ENCODE measurements at regions of chr21 and their contacts with region 1.

Region 1: DNA sequence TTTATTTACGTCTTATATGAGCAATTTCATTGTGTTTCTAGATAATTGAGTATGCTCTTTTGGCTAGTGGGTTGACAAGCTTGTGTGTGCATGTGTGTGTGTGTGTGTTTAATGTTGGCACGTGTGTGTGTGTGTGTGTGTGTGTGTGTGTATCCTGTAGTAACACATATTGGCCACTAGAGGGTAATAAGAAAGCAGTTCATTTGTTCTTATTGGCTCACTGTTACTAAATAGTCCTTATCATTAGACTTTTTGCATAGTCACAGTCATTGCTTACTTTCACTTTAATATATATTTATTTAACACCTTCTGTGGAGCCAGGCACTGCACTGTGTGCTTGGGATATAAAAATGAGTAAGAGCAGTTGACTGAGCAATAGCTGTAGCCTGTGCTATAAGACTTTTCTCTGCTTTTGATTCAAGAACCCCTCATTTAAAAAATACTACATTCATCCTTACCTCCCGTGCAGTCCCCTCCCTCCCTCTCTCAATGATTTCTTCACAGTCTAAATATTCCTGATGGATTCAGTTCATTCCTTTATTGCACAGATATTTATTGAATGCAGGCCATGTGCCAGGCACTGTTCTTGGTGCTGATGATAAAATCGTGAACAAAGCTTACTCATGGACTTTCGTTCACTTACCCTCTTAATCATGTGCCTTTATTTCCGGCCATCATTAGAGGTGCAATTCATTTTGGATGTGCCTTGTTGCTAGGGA is 96.7 kb downstream of the DYRK1A start:
- DNase-seq: peak; percentile 12
- ATAC-seq: peak; percentile 76
- H3K4me3 ChIP-seq: no peak overlapping the region
- H3K27ac ChIP-seq: no peak overlapping the region
- H3K4me1 ChIP-seq: peaks cover 11% of the 10 kb centered on the region
- H3K27me3 ChIP-seq: no peaks in the 10 kb centered on the region
- CTCF ChIP-seq: peak; percentile 65 to 79 (median 76)
- EP300 ChIP-seq: no peak
- POLR2A ChIP-seq: no peak
- RAD21 ChIP-seq: peak; percentile 46; the same call in 1 of the 2 replicates

Region 2: GRCh38 chr21:36350282-36350910 is 1112.8 kb before region 1 on chr21:
- CTCF ChIA-PET with region 1: no interaction called
- POLR2A ChIA-PET with region 1: no interaction called
- RAD21 ChIA-PET with region 1: no interaction called
- SMC1A ChIA-PET with region 1: no interaction called
- in situ Hi-C with region 1: no loop called
- intact Hi-C with region 1: no loop called
- DNase-seq: no peak
- ATAC-seq: no peak
- H3K4me3 ChIP-seq: no peak overlapping the region
- H3K27ac ChIP-seq: no peak overlapping the region
- H3K4me1 ChIP-seq: no peaks in the 10 kb centered on the region
- H3K27me3 ChIP-seq: no peaks in the 10 kb centered on the region
- CTCF ChIP-seq: no peak
- EP300 ChIP-seq: no peak
- POLR2A ChIP-seq: no peak
- RAD21 ChIP-seq: no peak

Region 3: DNA sequence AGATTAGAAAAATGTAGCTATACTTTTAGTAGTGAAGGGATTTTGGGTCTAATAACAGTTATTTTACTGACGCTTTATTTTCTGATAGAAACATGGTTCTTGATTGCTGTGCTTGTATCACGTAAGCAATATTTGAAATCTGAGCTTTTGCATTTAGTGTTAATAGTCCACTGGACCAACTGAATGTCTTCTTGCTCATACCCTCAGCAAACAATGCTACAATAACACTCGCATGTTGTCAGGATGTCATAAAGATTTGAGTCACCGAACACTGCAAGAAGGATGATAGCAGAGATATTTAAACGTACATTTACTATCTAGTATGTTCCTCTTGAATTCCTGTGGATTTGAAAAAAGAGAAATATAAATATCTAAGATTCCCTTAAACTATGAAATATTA is 89.2 kb before region 1 on chr21:
- CTCF ChIA-PET with region 1: interaction called, 10 read pairs
- POLR2A ChIA-PET with region 1: interaction called, 4 read pairs
- RAD21 ChIA-PET with region 1: no interaction called
- SMC1A ChIA-PET with region 1: interaction called, 20 read pairs
- in situ Hi-C with region 1: no loop called
- intact Hi-C with region 1: loop called (anchors 5 kb)
- DNase-seq: no peak
- ATAC-seq: no peak
- H3K4me3 ChIP-seq: no peak overlapping the region
- H3K27ac ChIP-seq: no peak overlapping the region
- H3K4me1 ChIP-seq: peaks cover 16% of the 10 kb centered on the region; the same call in 1 of the 2 replicates
- H3K27me3 ChIP-seq: no peaks in the 10 kb centered on the region
- CTCF ChIP-seq: no peak
- EP300 ChIP-seq: no peak
- POLR2A ChIP-seq: no peak
- RAD21 ChIP-seq: no peak

Region 4: GRCh38 chr21:37475186-37475868 is 12.1 kb after region 1 on chr21:
- CTCF ChIA-PET with region 1: interaction called, 9 read pairs
- POLR2A ChIA-PET with region 1: no interaction called
- RAD21 ChIA-PET with region 1: interaction called, 5 read pairs
- SMC1A ChIA-PET with region 1: interaction called, 10 read pairs
- in situ Hi-C with region 1: no loop called
- intact Hi-C with region 1: no loop called
- DNase-seq: no peak
- ATAC-seq: peak; percentile 26; the same call in 2 of the 3 replicates
- H3K4me3 ChIP-seq: no peak overlapping the region
- H3K27ac ChIP-seq: no peak overlapping the region
- H3K4me1 ChIP-seq: no peaks in the 10 kb centered on the region
- H3K27me3 ChIP-seq: no peaks in the 10 kb centered on the region
- CTCF ChIP-seq: no peak
- EP300 ChIP-seq: no peak
- POLR2A ChIP-seq: no peak
- RAD21 ChIP-seq: no peak

Region 5: GRCh38 chr21:37787456-37787855 is 324.2 kb after region 1 on chr21:
- CTCF ChIA-PET with region 1: no interaction called
- POLR2A ChIA-PET with region 1: no interaction called
- RAD21 ChIA-PET with region 1: no interaction called
- SMC1A ChIA-PET with region 1: no interaction called
- in situ Hi-C with region 1: no loop called
- intact Hi-C with region 1: no loop called
- DNase-seq: no peak
- ATAC-seq: no peak
- H3K4me3 ChIP-seq: no peak overlapping the region
- H3K27ac ChIP-seq: no peak overlapping the region
- H3K4me1 ChIP-seq: no peaks in the 10 kb centered on the region
- H3K27me3 ChIP-seq: no peaks in the 10 kb centered on the region
- CTCF ChIP-seq: no peak
- EP300 ChIP-seq: no peak
- POLR2A ChIP-seq: no peak
- RAD21 ChIP-seq: no peak